Caco-2 (cell line): ENCODE measurements at regions of chr12 and their contacts with region 1.

Region 1: GRCh38 chr12:32106517-32107358 is at the start of gene BICD1:
- DNase-seq: peak; percentile 96 to 98
- H3K4me3 ChIP-seq: peak within 1 kb of the TSS; percentile 91
- H3K4me3 Mint-ChIP-seq: peak within 1 kb of the TSS; percentile 82
- H3K27ac Mint-ChIP-seq: peak within 1 kb of the TSS; percentile 58
- H3K4me1 ChIP-seq: peaks cover 26% of the 10 kb centered on the region
- H3K4me1 Mint-ChIP-seq: peaks cover 25% of the 10 kb centered on the region
- H3K27me3 ChIP-seq: no peaks in the 10 kb centered on the region
- H3K27me3 Mint-ChIP-seq: no peaks in the 10 kb centered on the region
- CTCF ChIP-seq: peak; percentile 37 to 69
- total RNA-seq, gene BICD1: 36.2 and 38.8 TPM in 2 replicates

Region 2: DNA sequence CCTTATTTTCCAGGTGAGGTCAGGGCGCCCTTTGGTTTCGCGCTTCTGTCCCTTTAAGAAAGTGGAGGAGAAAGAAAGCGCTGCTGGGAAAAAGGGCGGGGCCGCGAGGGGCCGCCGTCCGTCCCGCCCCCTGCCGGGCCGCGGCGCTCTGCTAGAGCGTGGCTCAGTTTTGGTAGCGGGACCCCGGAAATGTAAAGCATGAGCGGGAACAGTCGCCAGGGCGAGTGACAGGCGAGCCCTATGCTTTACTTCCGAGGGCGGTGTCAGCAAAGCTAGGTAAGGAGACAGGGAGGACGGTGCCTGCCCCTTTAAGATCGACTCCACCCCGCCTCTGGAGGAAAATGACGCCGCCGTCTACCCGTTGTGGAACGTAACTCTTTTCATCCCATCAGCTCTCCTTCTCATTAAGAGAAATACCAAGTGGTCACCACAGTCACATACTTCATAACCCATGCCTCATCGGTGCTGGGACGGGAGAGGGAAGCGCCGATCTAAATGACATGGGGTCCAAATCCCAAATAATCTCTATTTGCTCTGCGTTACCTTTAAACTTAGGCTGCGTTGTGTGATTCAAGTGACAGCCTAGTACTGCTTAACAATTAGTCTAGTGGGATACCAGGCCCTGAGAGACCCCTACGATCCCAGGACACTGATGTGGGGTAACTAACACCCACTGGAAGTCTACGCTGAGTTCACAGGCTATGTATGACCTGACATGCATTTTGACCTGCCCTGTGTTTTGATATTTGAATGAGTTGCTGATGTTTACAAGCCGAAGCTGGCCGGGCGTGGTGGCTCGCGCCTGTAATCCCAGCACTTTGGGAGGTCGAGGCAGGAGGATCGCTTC is 447.4 kb before region 1 on chr12 and contains the start of gene ETFBKMT:
- CTCF ChIA-PET with region 1: no interaction called
- POLR2A ChIA-PET with region 1: interaction called, 5 read pairs
- intact Hi-C with region 1: loop called (anchors 2 kb)
- DNase-seq: peak; percentile 99
- H3K4me3 ChIP-seq: peak within 1 kb of the TSS; percentile 73
- H3K4me3 Mint-ChIP-seq: peak within 1 kb of the TSS; percentile 78
- H3K27ac Mint-ChIP-seq: peak within 1 kb of the TSS; percentile 80
- H3K4me1 ChIP-seq: peaks cover 4% of the 10 kb centered on the region; the same call in 1 of the 2 replicates
- H3K4me1 Mint-ChIP-seq: peaks cover 28% of the 10 kb centered on the region
- H3K27me3 ChIP-seq: no peaks in the 10 kb centered on the region
- H3K27me3 Mint-ChIP-seq: no peaks in the 10 kb centered on the region
- CTCF ChIP-seq: peak; percentile 51 to 74
- total RNA-seq, gene ETFBKMT: 1.6 and 2.1 TPM in 2 replicates

Region 3: DNA sequence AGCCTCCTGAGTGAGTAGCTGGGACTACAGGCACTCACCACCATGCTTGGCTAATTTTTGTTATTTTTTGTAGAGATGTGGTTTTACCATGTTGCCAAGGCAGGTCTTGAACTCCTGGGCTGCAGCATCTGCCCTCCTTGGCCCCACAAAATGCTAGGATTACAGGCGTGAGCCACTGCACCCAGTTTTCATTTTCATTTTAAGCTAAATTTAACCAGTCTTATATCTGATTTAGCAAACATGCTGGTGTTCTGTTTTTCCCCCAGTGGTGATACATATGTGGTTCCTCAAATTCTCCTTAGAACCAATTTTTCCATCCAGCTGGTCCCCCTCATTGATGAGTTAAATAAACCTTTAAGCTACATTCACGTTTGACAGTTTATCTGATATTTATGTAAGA is 43.9 kb before region 1 on chr12:
- CTCF ChIA-PET with region 1: interaction called, 6 read pairs
- POLR2A ChIA-PET with region 1: no interaction called
- intact Hi-C with region 1: loop called (anchors 1 kb)
- DNase-seq: no peak
- H3K4me3 ChIP-seq: no peak overlapping the region
- H3K4me3 Mint-ChIP-seq: no peak overlapping the region
- H3K27ac Mint-ChIP-seq: no peak overlapping the region
- H3K4me1 ChIP-seq: no peaks in the 10 kb centered on the region
- H3K4me1 Mint-ChIP-seq: no peaks in the 10 kb centered on the region
- H3K27me3 ChIP-seq: no peaks in the 10 kb centered on the region
- H3K27me3 Mint-ChIP-seq: no peaks in the 10 kb centered on the region
- CTCF ChIP-seq: no peak

Region 4: DNA sequence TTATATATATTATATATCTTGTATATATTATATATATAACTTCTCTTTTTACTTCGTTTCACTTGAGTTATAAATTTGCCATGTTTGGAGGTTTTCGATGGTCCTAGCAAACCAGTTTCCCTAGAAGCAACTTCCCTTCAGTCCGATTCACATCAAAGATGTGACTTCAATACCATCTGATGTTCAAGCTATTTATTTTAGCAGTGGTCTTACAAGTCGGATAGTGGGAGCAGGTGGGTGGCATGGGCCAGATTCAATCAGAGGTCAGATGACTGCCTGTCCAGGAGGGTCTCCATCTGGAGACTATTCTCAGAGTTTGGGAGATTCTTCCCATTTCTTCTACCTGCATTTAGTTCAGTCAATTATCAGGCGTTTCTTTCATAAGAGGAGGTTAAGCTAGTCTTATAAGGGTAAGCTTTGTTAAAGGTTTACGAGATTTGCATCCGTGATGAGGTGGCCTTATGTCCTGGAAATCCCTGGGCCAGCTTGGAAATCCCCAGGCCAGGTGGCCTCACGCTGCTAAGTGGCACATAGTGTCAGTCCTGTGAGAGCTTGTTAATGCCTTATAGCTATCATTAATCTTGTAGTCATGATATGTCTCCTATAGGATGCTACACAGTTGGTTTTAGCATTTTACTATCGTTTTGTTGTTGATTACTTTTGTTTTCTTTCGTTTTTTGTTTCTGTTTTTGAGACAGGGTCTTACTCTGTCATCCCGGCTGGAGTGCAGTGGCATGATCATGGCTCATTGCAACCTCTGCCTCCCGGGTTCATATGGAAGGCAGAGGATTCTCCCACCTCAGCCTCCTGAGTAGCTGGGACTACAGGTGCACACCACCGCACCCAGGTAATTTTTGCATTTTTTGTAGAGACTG is 145.7 kb after region 1 on chr12:
- CTCF ChIA-PET with region 1: no interaction called
- POLR2A ChIA-PET with region 1: no interaction called
- intact Hi-C with region 1: no loop called
- DNase-seq: no peak
- H3K4me3 ChIP-seq: no peak overlapping the region
- H3K4me3 Mint-ChIP-seq: no peak overlapping the region
- H3K27ac Mint-ChIP-seq: no peak overlapping the region
- H3K4me1 ChIP-seq: no peaks in the 10 kb centered on the region
- H3K4me1 Mint-ChIP-seq: peaks cover 11% of the 10 kb centered on the region
- H3K27me3 ChIP-seq: no peaks in the 10 kb centered on the region
- H3K27me3 Mint-ChIP-seq: no peaks in the 10 kb centered on the region
- CTCF ChIP-seq: no peak

Region 5: GRCh38 chr12:32302218-32303173 is 195.8 kb after region 1 on chr12:
- CTCF ChIA-PET with region 1: no interaction called
- POLR2A ChIA-PET with region 1: no interaction called
- intact Hi-C with region 1: loop called (anchors 2 kb)
- DNase-seq: no peak
- H3K4me3 ChIP-seq: no peak overlapping the region
- H3K4me3 Mint-ChIP-seq: no peak overlapping the region
- H3K27ac Mint-ChIP-seq: peak overlapping the region; percentile 29
- H3K4me1 ChIP-seq: 0 out of 2 replicates have a peak, but pooled peaks cover 11% of the 10 kb centered on the region
- H3K4me1 Mint-ChIP-seq: peaks cover 25% of the 10 kb centered on the region
- H3K27me3 ChIP-seq: no peaks in the 10 kb centered on the region
- H3K27me3 Mint-ChIP-seq: no peaks in the 10 kb centered on the region
- CTCF ChIP-seq: no peak